Prostate gland (tissue), 2 donors: ENCODE measurements at regions of chr7 and their contacts with region 1.

Region 1: DNA sequence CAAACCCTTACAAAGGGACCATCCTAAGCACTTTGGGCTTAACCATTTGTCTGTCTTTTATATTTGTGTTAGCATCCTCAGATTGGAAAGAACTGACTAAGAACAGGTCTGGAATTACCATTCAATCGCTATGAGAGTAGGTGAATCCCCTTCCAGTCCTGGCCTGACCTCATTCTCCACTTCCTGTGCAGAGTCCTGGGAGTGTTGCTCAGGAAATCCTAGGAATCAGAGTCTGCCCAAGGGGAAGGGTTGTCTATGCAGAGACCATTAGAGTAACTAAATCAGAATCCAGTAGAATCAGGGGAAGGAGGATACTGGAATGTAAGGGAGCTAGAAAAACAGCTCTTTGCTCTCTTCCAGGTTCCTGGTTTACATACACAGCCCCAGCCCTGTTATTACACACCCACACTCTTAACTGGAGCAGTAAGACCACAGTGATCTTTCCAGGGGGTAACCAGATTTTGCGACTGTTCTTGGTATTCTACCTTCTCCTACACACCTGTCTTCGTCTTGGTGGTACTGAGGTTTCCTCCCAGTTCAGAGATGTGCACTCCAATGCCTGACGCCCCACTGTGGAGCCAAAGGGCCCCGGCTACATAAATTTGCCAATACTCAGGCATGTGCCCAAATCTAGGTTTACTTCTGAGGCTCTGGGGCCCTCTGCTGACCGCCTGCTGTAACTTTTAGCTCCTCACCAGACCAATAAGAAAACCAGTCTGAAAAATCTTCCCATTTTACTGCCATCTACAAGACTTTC is 103.7 kb downstream of the RNF216 start:
- DNase-seq: peak; percentile 44
- H3K4me3 ChIP-seq: no peak overlapping the region
- H3K27ac ChIP-seq: no peak overlapping the region
- H3K4me1 ChIP-seq: peaks cover 4% of the 10 kb centered on the region
- H3K27me3 ChIP-seq: no peaks in the 10 kb centered on the region
- CTCF ChIP-seq: peak; percentile 18 to 68 (median 60)
- POLR2A ChIP-seq: no peak

Region 2: DNA sequence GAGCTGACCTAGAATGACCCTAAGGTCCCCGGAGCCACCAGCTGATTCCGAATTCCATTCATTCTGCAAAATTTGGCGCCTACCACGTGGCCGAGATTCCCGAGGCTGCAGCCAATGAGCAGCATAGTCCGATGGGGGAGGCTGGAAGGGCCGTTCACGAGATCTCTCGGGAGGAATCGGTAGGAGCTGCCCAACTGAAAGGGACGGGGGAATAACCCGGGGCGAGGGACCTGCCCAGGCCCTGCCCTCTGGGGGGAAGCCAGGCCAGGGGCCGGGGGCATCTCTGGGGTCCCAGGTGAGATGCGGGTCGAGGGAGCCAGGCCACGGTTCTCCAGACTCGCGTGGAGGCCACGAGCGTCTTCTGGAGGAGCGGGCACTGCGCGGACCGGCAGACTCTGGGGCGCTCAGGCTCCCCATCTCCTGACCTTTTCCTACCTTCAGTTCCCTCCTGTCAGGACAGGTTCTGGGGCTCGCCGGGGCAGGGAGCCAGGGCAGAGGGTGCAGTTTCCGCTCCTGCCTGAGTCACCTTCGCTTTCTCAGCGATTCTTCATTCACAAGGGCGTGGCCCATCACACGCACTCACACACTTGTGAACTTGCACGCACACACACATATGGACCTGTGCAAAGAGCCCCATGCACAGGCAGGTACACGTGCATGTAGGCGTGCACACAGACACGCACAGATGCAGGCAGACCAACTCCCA is 69.6 kb before region 1 on chr7:
- intact Hi-C with region 1: no loop called
- DNase-seq: no peak
- H3K4me3 ChIP-seq: no peak overlapping the region
- H3K27ac ChIP-seq: no peak overlapping the region
- H3K4me1 ChIP-seq: no peaks in the 10 kb centered on the region
- H3K27me3 ChIP-seq: no peaks in the 10 kb centered on the region
- CTCF ChIP-seq: no peak
- POLR2A ChIP-seq: no peak

Region 3: GRCh38 chr7:5704534-5704922 is 26.8 kb after region 1 on chr7:
- intact Hi-C with region 1: loop called (anchors 2 kb)
- DNase-seq: peak; percentile 80
- H3K4me3 ChIP-seq: no peak overlapping the region
- H3K27ac ChIP-seq: peak overlapping the region in 1 of 2 donors; percentile 53
- H3K4me1 ChIP-seq: no peaks in the 10 kb centered on the region
- H3K27me3 ChIP-seq: no peaks in the 10 kb centered on the region
- CTCF ChIP-seq: peak; percentile 66 to 95 (median 90)
- POLR2A ChIP-seq: no peak